Right cardiac atrium (tissue), 5 donors: ENCODE measurements at regions of chr1 and their contacts with region 1.

Region 1: DNA sequence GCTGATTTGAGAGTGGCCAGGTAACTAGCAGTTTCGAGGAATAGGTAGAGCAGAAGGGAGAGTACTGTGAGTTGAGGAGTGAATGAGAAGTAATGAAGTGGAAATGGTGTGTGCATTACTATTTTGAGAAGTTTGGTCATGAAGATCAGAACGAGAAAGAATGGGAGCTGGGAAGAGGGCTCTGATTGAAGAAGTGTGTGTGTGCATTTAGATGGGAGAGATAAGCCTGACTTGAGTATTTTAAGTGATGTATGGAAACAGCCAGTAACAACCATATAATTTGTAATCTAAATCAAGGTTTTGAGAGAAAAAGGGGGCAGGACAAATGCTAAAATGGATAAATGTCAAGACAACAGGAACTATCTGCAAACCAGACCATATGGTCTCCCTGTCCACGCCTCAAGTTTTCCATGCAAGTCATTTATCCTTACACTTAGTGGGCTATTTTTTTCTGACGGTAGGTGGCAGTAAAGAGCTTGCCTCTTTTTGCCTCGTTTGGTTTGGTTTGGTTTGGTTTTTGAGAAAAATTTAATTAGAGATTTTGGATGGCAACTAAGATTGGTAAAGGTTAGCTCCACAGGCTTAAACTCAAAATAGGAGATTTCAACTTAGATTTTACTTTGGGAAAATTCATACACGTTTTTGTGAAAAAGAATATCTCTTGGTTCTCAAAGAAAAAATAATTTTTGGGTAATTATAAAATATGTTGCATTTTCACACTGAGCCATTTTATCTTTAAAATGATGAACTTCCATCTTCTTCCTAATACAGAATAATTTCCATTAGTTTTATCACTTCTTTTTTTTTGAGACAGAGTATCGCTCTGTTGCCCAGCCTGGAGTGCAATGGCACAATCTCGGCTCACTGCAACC is 9.5 kb upstream of the B3GALNT2 start:
- DNase-seq: no peak
- ATAC-seq: peak; percentile 51 to 64
- H3K4me3 ChIP-seq: no peak overlapping the region
- H3K27ac ChIP-seq: no peak overlapping the region
- H3K4me1 ChIP-seq: no peaks in the 10 kb centered on the region
- H3K27me3 ChIP-seq: no peaks in the 10 kb centered on the region

Region 2: GRCh38 chr1:235423191-235423652 is 90.5 kb before region 1 on chr1:
- intact Hi-C with region 1: no loop called
- DNase-seq: no peak
- ATAC-seq: no peak
- H3K4me3 ChIP-seq: no peak overlapping the region
- H3K27ac ChIP-seq: no peak overlapping the region
- H3K4me1 ChIP-seq: no peaks in the 10 kb centered on the region
- H3K27me3 ChIP-seq: no peaks in the 10 kb centered on the region

Region 3: GRCh38 chr1:235776396-235776795 is 262.7 kb after region 1 on chr1:
- intact Hi-C with region 1: loop called (anchors 10 kb)
- DNase-seq: no peak
- ATAC-seq: no peak
- H3K4me3 ChIP-seq: no peak overlapping the region
- H3K27ac ChIP-seq: no peak overlapping the region
- H3K4me1 ChIP-seq: no peaks in the 10 kb centered on the region
- H3K27me3 ChIP-seq: no peaks in the 10 kb centered on the region

Region 4: GRCh38 chr1:235783148-235783776 is 269.5 kb after region 1 on chr1:
- intact Hi-C with region 1: loop called (anchors 10 kb)
- DNase-seq: no peak
- ATAC-seq: no peak
- H3K4me3 ChIP-seq: no peak overlapping the region
- H3K27ac ChIP-seq: no peak overlapping the region
- H3K4me1 ChIP-seq: no peaks in the 10 kb centered on the region
- H3K27me3 ChIP-seq: no peaks in the 10 kb centered on the region